ENCODE measurements at regions of chr5 and their contacts with region 1.

Region 1: DNA sequence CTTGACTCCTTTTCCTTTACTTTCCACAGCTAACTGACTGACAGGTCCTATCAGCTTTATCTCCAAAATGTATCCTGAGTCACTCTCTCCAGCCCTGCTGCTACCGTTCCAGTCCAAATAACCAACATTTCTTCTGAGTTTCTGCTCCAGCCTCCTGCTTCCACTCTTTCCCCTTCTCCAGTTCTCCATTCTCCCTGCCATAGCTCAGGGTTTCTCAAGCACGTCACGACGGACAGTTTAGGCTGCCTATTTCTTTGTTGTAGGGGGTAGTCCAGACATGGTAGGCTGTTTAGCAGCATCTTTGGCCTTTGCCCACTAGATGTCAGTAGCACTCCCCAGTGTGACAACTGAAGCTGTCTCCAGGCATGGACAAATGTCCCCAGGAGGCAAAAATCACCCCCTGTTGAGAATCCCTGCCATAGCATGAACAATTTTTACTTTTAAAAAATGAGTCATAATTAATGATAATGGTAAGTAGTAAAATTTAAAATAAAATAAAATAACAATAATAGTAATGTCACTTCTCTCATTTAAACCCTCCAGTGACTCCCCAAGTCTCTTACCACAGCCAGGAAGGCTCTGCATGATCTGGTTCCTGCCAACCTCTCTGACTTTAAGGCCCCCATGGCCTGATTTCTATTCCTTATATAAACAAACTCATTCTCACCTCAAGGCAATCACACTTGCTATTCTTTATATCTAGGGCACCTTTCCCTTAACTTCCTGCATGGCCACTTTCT is 105.4 kb upstream of the FER start:
- DNase-seq: peak; percentile 61
- H3K4me3 ChIP-seq: no peak overlapping the region
- H3K27ac ChIP-seq: no peak overlapping the region
- H3K4me1 ChIP-seq: no peaks in the 10 kb centered on the region
- CTCF ChIP-seq: peak; percentile 89

Region 2: GRCh38 chr5:108521841-108522506 is 120.4 kb before region 1 on chr5:
- CTCF ChIA-PET with region 1: no interaction called
- POLR2A ChIA-PET with region 1: no interaction called
- intact Hi-C with region 1: loop called (anchors 5 kb)
- DNase-seq: peak; percentile 57
- H3K4me3 ChIP-seq: no peak overlapping the region
- H3K27ac ChIP-seq: no peak overlapping the region
- H3K4me1 ChIP-seq: peaks cover 9% of the 10 kb centered on the region
- CTCF ChIP-seq: peak; percentile 84

Region 3: GRCh38 chr5:108655750-108656450 is 13.6 kb after region 1 on chr5:
- CTCF ChIA-PET with region 1: no interaction called
- POLR2A ChIA-PET with region 1: no interaction called
- intact Hi-C with region 1: no loop called
- DNase-seq: no peak
- H3K4me3 ChIP-seq: no peak overlapping the region
- H3K27ac ChIP-seq: no peak overlapping the region
- H3K4me1 ChIP-seq: no peaks in the 10 kb centered on the region
- CTCF ChIP-seq: no peak

Measured in OCI-LY7 (cell line).